ENCODE measurements at regions of chr12 and their contacts with region 1.

Region 1: GRCh38 chr12:22624870-22625761 is at the start of gene ETNK1:
- DNase-seq: peak; percentile 91
- H3K4me3 ChIP-seq: peak within 1 kb of the TSS; percentile 78 to 99
- H3K27ac ChIP-seq: peak within 1 kb of the TSS; percentile 88 to 93
- H3K4me1 ChIP-seq: peaks cover 4 to 8% of the 10 kb centered on the region in 2 experiments; a peak in 3 of 4 replicates
- H3K27me3 ChIP-seq: no peaks in the 10 kb centered on the region
- CTCF ChIP-seq: no peak
- EP300 ChIP-seq: no peak
- RAD21 ChIP-seq: no peak
- polyA plus RNA-seq, gene ETNK1: 7.7 and 7.9 TPM in 2 replicates

Region 2: DNA sequence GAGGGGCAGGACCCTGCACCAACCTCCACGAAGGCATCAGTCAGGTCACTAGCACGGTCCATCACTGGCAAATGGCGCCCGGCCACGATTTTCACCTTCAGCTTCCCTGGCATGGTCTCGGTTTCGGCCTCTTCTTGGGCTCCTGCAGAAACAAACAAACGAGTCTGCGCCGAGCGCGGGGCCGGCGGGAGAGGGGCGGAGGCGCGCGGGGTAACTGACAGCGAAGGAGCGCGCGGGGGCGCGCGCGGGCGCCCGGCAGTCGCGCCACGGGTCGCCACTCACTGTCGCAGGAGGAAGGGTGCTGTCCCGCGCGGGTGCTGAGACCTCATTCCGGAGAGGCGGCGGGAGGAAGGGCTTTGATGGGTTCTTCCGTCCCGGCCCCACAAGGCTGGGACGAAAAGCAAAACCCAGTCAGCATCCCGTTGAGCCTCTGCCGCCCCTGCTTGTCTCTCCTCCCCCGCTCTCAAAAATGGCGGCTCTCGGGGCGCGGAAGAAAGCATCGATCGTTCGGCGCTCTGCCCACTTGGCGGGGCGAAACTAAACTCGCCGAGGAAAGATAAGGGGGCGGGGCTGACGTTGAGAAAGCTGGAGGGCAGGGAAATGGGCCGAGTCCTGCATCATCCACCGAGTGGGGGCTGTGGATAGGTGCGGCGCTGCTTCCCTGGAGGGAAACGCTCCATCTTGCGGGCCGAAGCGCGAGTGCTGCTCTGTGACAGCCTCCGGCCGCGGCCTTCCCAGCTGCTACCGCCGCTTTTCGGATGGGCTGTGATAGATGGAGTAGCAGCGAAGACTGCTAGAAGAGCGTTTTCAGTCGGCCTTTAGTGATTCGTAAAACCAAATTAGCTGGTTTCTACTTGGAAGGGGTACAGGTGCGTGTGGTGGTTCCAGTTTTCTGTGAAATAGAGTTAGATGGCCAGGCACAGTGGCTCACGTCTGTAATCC is 80.8 kb before region 1 on chr12 and contains the start of gene C2CD5:
- CTCF ChIA-PET with region 1: no interaction called
- POLR2A ChIA-PET with region 1: interaction called, 12 read pairs
- DNase-seq: peak; percentile 93
- H3K4me3 ChIP-seq: peak within 1 kb of the TSS; percentile 77
- H3K27ac ChIP-seq: peak within 1 kb of the TSS; percentile 92 to 94
- H3K4me1 ChIP-seq: no peaks in the 10 kb centered on the region; a peak in 1 of 4 replicates
- H3K27me3 ChIP-seq: no peaks in the 10 kb centered on the region
- CTCF ChIP-seq: peak; percentile 34
- EP300 ChIP-seq: no peak
- RAD21 ChIP-seq: peak; percentile 36
- polyA plus RNA-seq, gene C2CD5: 9.2 and 12.1 TPM in 2 replicates

Region 3: DNA sequence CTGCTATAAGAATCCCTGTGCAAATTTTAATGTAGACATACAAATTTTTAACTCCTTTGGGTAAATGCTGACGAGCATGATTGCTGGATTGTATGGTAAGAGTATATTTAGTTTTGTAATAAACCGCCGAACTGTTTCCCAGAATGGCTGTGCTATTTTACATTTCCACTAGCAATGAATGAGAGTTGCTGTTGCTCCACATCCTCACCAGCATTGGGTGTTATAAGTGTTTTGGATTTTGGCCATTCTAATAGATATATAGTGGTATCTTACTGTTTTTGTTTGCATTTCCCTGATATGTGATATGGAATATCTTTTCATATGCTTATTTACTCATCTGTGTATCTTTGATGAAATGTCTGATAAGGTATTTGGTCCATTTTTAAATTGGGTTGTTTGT is 23.6 kb after region 1 on chr12:
- CTCF ChIA-PET with region 1: no interaction called
- POLR2A ChIA-PET with region 1: no interaction called
- DNase-seq: no peak
- H3K4me3 ChIP-seq: no peak overlapping the region
- H3K27ac ChIP-seq: no peak overlapping the region
- H3K4me1 ChIP-seq: no peaks in the 10 kb centered on the region; a peak in 1 of 4 replicates
- H3K27me3 ChIP-seq: no peaks in the 10 kb centered on the region
- CTCF ChIP-seq: no peak
- EP300 ChIP-seq: no peak
- RAD21 ChIP-seq: no peak